ENCODE measurements at regions of chr18 and their contacts with region 1.

Region 1: DNA sequence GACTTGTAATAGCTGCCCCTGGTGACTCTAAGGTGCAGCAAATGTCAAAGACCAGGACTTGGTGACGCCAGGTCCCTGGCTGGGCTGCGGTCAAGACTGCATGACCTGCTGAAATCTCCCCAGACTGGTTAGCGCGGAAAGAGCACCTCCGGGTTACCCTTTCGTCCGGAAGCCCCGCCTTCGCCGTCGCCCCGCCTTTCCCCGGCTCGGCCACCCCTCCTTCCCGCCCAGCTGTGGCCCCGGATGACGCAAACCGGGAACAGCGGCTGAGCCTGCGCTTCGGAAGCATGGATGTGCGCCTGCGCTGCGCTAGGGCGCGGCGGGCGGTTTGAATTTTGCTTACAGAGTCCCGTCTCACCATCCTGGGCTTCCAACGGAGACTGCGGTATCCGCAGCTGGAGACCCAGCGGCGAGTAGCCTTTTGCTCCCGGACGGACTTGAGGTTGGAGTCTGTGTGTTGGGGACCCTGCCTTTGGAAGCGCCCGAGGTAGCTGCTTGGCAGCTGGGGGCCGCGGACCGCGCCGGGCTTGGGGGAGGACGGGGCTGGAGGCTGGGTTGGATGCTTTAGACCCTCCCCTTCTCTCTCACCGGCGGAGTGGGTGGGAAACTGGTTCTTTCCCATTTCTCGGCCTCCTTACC is at the start of gene SKA1:
- DNase-seq: peak; percentile 82 to 95 (median 91)
- ATAC-seq: peak; percentile 100
- H3K4me3 ChIP-seq: peak within 1 kb of the TSS; percentile 68 to 70
- H3K4me3 Mint-ChIP-seq: peak within 1 kb of the TSS; percentile 79
- H3K27ac ChIP-seq: peak within 1 kb of the TSS; percentile 57 to 76
- H3K27ac Mint-ChIP-seq: peak within 1 kb of the TSS; percentile 88
- H3K4me1 ChIP-seq: peaks cover 14% of the 10 kb centered on the region
- H3K4me1 Mint-ChIP-seq: peaks cover 12% of the 10 kb centered on the region
- H3K27me3 ChIP-seq: peaks cover 0 to 6% of the 10 kb centered on the region in 2 experiments
- H3K27me3 Mint-ChIP-seq: peaks cover 10% of the 10 kb centered on the region
- CTCF ChIP-seq: no peak
- total RNA-seq, gene SKA1: 0.22 to 0.27 TPM

Region 2: DNA sequence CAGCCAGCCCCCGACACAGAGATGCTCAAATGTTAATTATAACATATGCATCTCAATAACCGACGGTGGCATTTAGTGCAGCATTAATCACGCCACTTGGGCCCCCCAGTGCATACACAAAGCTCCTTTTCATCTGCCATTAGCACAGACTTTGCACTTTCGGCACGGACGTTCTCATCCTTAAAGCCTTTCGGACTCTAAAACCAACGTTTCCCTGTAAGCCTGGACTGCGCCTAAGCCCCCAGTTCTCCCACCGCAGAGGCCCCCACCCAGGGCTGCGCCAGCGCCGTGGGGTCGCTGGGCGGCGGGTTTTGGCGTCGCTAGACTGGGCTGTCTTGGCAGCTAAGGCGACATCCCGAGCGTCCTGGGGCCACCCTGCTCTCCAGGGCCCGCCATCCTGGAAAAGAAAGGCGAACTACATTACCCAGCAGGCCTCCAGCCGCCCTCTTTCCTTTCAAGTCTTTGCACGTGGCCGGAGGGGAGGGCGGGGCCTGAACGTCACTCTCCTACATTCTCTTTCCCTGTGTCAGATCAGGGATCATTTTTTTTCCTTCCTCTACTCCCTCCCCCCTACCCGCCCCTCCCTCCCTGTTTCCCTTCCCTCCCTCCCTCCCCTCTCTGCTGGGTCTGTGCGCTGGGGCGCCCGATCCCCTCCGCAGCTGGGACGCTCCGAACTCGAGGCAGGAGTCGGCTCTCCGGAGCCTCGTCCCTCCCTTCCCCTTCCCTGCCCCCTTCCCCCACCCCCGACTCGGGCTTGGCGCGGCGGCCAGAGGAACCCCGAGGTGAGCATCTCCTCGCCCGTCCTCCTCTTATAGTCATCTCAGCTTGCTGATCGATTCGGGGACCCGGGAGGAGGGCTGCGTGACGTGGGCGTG is 1836.1 kb before region 1 on chr18 and contains the start of gene CTIF:
- CTCF ChIA-PET with region 1: no interaction called
- POLR2A ChIA-PET with region 1: no interaction called
- intact Hi-C with region 1: loop called in 1 of 2 experiments (anchors 10 kb)
- DNase-seq: peak in 8 of 9 experiments; percentile 30 to 72 (median 57)
- ATAC-seq: peak; percentile 66
- H3K4me3 ChIP-seq: peak within 1 kb of the TSS; percentile 63 to 77
- H3K4me3 Mint-ChIP-seq: peak within 1 kb of the TSS; percentile 86
- H3K27ac ChIP-seq: no peak within 1 kb of the TSS
- H3K27ac Mint-ChIP-seq: no peak within 1 kb of the TSS
- H3K4me1 ChIP-seq: peaks cover 6% of the 10 kb centered on the region
- H3K4me1 Mint-ChIP-seq: peaks cover 10% of the 10 kb centered on the region
- H3K27me3 ChIP-seq: peaks cover 0 to 12% of the 10 kb centered on the region in 2 experiments
- H3K27me3 Mint-ChIP-seq: peaks cover 20% of the 10 kb centered on the region
- CTCF ChIP-seq: no peak
- total RNA-seq, gene CTIF: 2.0 to 3.0 TPM

Region 3: GRCh38 chr18:49459404-49460171 is 915.3 kb before region 1 on chr18:
- CTCF ChIA-PET with region 1: no interaction called
- POLR2A ChIA-PET with region 1: no interaction called
- intact Hi-C with region 1: loop called in 1 of 2 experiments (anchors 1 kb)
- DNase-seq: peak in 4 of 9 experiments; percentile 10 to 54 (median 30)
- ATAC-seq: peak; percentile 9
- H3K4me3 ChIP-seq: peak overlapping the region; percentile 88 to 94
- H3K4me3 Mint-ChIP-seq: peak overlapping the region; percentile 93
- H3K27ac ChIP-seq: peak overlapping the region in 1 of 2 experiments; percentile 74
- H3K27ac Mint-ChIP-seq: peak overlapping the region; percentile 90
- H3K4me1 ChIP-seq: peaks cover 17% of the 10 kb centered on the region
- H3K4me1 Mint-ChIP-seq: peaks cover 52% of the 10 kb centered on the region
- H3K27me3 ChIP-seq: no peaks in the 10 kb centered on the region
- H3K27me3 Mint-ChIP-seq: no peaks in the 10 kb centered on the region
- CTCF ChIP-seq: no peak

Region 4: GRCh38 chr18:49813319-49814146 is 561.3 kb before region 1 on chr18 and contains the start of gene ACAA2:
- CTCF ChIA-PET with region 1: no interaction called
- POLR2A ChIA-PET with region 1: no interaction called
- intact Hi-C with region 1: loop called (anchors 1 kb)
- DNase-seq: peak; percentile 53 to 91 (median 77)
- ATAC-seq: peak; percentile 81
- H3K4me3 ChIP-seq: peak within 1 kb of the TSS; percentile 88 to 93
- H3K4me3 Mint-ChIP-seq: peak within 1 kb of the TSS; percentile 97
- H3K27ac ChIP-seq: peak within 1 kb of the TSS; percentile 90 to 95
- H3K27ac Mint-ChIP-seq: peak within 1 kb of the TSS; percentile 95
- H3K4me1 ChIP-seq: peaks cover 37% of the 10 kb centered on the region
- H3K4me1 Mint-ChIP-seq: peaks cover 62% of the 10 kb centered on the region
- H3K27me3 ChIP-seq: no peaks in the 10 kb centered on the region
- H3K27me3 Mint-ChIP-seq: no peaks in the 10 kb centered on the region
- CTCF ChIP-seq: no peak
- total RNA-seq, gene ACAA2: 9.5 to 10.0 TPM

Region 5: GRCh38 chr18:50281295-50281971 is 93.4 kb before region 1 on chr18 and contains the start of gene MBD1:
- CTCF ChIA-PET with region 1: no interaction called
- POLR2A ChIA-PET with region 1: interaction called, 5 read pairs
- intact Hi-C with region 1: loop called (anchors 1 to 2 kb)
- DNase-seq: peak; percentile 93 to 99 (median 97)
- ATAC-seq: peak; percentile 92
- H3K4me3 ChIP-seq: peak within 1 kb of the TSS; percentile 80 to 90
- H3K4me3 Mint-ChIP-seq: peak within 1 kb of the TSS; percentile 98
- H3K27ac ChIP-seq: peak within 1 kb of the TSS; percentile 81 to 90
- H3K27ac Mint-ChIP-seq: peak within 1 kb of the TSS; percentile 96
- H3K4me1 ChIP-seq: peaks cover 38% of the 10 kb centered on the region
- H3K4me1 Mint-ChIP-seq: peaks cover 49% of the 10 kb centered on the region
- H3K27me3 ChIP-seq: no peaks in the 10 kb centered on the region
- H3K27me3 Mint-ChIP-seq: no peaks in the 10 kb centered on the region
- CTCF ChIP-seq: no peak
- total RNA-seq, gene MBD1: 88.5 to 96.0 TPM

Region 6: DNA sequence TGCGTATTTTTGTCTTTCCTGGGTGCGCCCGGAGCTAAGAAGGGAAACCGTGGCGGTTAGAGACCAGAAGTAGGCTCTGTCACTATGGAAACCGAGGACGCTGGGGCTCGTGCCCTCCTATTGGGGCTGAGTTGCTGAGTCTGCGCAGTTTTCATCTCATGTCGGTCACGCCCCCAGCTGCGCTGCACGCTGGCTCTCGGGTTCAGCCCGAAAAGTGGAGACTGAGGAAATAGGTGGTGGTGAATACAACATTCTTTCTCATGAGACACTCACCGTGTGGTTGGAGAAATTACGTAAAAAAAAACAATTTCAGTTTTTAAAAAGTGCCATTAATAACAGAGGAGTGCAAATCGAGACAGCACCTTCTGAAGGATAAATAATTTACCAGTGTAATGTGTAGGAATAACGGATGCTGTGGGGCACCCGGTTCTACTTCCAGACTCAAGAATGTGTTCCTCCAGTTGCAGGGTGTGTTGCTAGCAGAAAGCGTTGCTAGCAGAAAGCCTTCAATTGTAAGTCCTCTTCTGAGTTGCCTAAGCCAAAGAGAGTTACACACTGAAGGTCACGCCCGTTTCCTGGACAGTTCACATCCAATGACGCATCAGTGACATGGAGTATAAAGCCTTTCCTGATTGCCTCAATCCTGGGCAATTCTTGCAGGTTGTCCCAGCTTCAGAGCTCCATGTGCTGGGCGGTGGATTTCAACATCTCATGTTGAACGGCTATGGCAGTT is 67.0 kb before region 1 on chr18:
- CTCF ChIA-PET with region 1: no interaction called
- POLR2A ChIA-PET with region 1: no interaction called
- intact Hi-C with region 1: loop called (anchors 1 to 2 kb)
- DNase-seq: peak; percentile 75 to 96 (median 91)
- ATAC-seq: peak; percentile 99
- H3K4me3 ChIP-seq: peak overlapping the region; percentile 52 to 59
- H3K4me3 Mint-ChIP-seq: peak overlapping the region; percentile 96
- H3K27ac ChIP-seq: peak overlapping the region; percentile 24 to 41
- H3K27ac Mint-ChIP-seq: peak overlapping the region; percentile 63
- H3K4me1 ChIP-seq: peaks cover 6% of the 10 kb centered on the region
- H3K4me1 Mint-ChIP-seq: peaks cover 20% of the 10 kb centered on the region
- H3K27me3 ChIP-seq: peaks cover 0 to 4% of the 10 kb centered on the region in 2 experiments
- H3K27me3 Mint-ChIP-seq: peaks cover 12% of the 10 kb centered on the region
- CTCF ChIP-seq: no peak

Region 7: DNA sequence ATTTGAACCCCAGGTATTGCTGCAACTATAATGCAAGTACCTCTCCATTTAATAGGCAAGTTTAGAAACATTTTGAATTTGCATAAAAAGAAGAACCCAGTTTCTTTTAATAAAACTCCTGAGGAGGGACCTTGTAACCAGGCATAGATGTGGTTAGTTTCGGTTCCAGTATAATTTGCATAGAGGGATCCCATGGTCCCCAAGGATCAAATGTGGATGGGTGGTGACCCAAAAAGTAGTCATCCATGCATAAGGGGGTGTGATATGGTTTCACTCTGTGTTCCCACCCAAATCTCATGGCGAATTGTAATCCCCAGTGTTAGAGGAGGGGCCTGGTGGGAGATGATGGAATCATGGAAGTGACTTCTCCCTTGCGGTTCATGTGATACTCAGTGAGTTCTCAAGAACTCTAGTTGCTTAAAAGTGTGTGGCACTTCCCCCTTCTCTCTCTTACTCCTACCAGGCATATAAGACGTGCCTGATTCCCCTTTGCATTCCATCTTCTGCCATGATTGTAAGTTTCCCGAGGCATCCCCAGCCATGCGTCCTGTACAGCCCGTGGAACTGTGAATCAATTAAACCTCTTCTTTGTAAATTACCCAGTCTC is 40.2 kb before region 1 on chr18:
- CTCF ChIA-PET with region 1: no interaction called
- POLR2A ChIA-PET with region 1: no interaction called
- intact Hi-C with region 1: no loop called
- DNase-seq: no peak
- ATAC-seq: no peak
- H3K4me3 ChIP-seq: no peak overlapping the region
- H3K4me3 Mint-ChIP-seq: no peak overlapping the region
- H3K27ac ChIP-seq: no peak overlapping the region
- H3K27ac Mint-ChIP-seq: no peak overlapping the region
- H3K4me1 ChIP-seq: no peaks in the 10 kb centered on the region
- H3K4me1 Mint-ChIP-seq: no peaks in the 10 kb centered on the region
- H3K27me3 ChIP-seq: no peaks in the 10 kb centered on the region
- H3K27me3 Mint-ChIP-seq: peaks cover 2% of the 10 kb centered on the region
- CTCF ChIP-seq: no peak

Region 8: GRCh38 chr18:51197661-51198424 is 823.0 kb after region 1 on chr18 and contains the start of gene MEX3C:
- CTCF ChIA-PET with region 1: no interaction called
- POLR2A ChIA-PET with region 1: no interaction called
- intact Hi-C with region 1: loop called in 1 of 2 experiments (anchors 10 kb)
- DNase-seq: peak; percentile 97 to 99 (median 99)
- ATAC-seq: peak; percentile 82
- H3K4me3 ChIP-seq: peak within 1 kb of the TSS; percentile 83 to 96
- H3K4me3 Mint-ChIP-seq: peak within 1 kb of the TSS; percentile 96
- H3K27ac ChIP-seq: peak within 1 kb of the TSS; percentile 80
- H3K27ac Mint-ChIP-seq: peak within 1 kb of the TSS; percentile 95
- H3K4me1 ChIP-seq: peaks cover 24% of the 10 kb centered on the region
- H3K4me1 Mint-ChIP-seq: peaks cover 33% of the 10 kb centered on the region
- H3K27me3 ChIP-seq: no peaks in the 10 kb centered on the region
- H3K27me3 Mint-ChIP-seq: no peaks in the 10 kb centered on the region
- CTCF ChIP-seq: peak; percentile 34
- total RNA-seq, gene MEX3C: 78.7 to 83.3 TPM